AG04450 (cell line): ENCODE measurements at regions of chr10 and their contacts with region 1.

Region 1: GRCh38 chr10:104274762-104275721 is 6.1 kb downstream of the GSTO2 start:
- DNase-seq: no peak
- H3K4me3 ChIP-seq: peak overlapping the region; percentile 32
- H3K27ac ChIP-seq: no peak overlapping the region
- H3K27me3 ChIP-seq: peaks cover 2% of the 10 kb centered on the region
- CTCF ChIP-seq: peak; percentile 84

Region 2: DNA sequence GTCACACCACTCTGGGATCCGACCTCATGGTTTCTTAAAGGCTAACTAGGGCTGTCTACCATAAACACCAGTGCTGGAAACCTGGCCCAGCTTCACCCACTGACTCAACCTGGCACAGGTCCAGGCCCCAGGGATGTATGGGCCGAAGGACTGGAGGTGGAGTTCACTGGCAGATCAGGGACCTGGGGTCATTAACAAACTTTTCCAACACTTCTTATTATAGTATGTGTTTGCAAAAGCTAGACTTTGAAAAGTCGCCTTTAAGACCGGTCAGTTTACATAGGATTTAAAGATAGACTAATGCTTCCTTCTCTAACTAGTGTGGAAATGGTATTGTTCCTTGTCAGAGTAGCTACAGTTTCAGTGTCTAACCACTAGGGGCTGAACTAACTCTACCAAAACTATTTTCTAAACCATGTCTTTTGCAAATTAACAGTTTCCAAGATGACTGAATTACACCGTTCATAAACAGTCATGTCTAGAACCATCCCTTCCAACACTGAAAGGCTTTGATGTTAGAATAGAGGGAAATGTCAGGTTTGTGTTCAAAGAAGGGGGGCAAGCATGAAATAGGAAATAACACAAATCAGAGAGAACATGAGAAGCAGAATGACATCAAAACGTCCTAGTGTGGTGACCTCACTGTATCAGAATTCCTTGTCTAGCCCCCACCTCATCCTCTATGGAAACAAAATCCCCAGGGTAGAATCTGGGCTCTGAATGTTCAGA is 386.8 kb before region 1 on chr10:
- CTCF ChIA-PET with region 1: interaction called, 10 read pairs
- POLR2A ChIA-PET with region 1: interaction called, 3 read pairs
- DNase-seq: peak; percentile 73
- H3K4me3 ChIP-seq: no peak overlapping the region
- H3K27ac ChIP-seq: peak overlapping the region; percentile 33
- H3K27me3 ChIP-seq: no peaks in the 10 kb centered on the region
- CTCF ChIP-seq: peak; percentile 92

Region 3: DNA sequence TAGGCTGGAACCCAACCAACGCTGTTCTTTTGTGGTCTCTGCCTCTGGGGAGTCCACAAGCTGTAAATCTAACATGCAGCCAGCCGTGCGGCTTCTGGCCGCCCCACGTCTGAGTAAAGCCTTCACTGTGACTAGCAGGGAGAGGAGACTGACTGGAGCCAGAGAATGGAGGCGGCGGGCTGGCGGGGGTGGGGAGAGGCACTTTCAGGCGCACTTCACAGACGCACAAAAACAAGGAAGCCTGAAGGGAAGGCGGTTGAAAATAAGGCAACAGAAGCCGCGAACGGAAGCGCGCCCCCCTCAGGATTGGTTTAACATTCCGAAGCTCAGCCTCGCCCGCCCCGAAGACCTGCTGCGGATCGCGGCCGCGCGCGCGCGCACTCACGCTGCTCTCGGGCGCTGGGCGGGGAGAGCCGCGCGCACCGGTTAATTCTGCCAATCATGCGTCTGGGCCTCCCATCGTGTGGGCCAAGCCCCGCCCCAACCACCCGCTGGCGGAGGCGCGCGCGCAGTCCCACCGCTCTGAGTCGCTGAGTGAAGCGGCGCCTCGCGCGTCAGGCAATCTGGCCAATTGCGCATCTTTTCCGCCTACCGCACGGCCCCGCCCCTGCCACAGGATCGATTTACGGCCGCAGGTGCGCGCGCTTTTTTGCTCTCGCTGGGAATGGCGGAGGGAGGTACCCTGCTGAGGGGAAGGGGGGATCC is 153.4 kb before region 1 on chr10 and contains the start of gene SFR1:
- CTCF ChIA-PET with region 1: interaction called, 13 read pairs
- POLR2A ChIA-PET with region 1: interaction called, 3 read pairs
- DNase-seq: peak; percentile 94
- H3K4me3 ChIP-seq: peak within 1 kb of the TSS; percentile 90
- H3K27ac ChIP-seq: peak within 1 kb of the TSS; percentile 99
- H3K27me3 ChIP-seq: no peaks in the 10 kb centered on the region
- CTCF ChIP-seq: peak; percentile 62
- polyA plus RNA-seq, gene SFR1: 2.6 and 3.9 TPM in 2 replicates

Region 4: DNA sequence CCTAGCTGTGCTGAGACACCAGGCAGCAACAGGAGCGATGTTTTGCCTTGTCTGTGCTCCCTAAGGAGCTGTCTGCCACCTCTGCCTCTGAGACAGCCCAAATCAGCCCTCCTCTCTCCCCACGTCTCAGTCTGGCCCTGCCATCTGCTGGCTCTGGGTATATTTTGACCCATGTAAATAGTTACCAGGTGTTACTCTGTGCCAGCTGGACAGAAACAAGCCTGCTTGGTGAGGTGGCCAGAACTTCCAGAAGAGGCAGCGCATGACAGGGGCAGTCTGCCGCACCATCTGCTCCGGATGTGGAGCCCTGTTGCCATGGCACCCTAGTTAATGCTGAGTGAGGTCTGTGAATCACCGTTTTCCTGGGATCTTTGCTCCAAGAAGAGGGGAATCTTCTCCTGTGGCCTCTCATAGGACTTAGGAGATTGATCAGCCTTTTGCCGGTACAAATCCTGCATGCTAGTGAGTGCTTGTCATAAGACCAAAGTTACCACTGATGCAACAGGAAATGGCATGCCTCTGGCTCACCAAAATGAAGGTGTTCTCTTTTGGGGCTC is 25.8 kb after region 1 on chr10:
- CTCF ChIA-PET with region 1: interaction called, 35 read pairs
- POLR2A ChIA-PET with region 1: no interaction called
- DNase-seq: peak; percentile 93
- H3K4me3 ChIP-seq: peak overlapping the region; percentile 48
- H3K27ac ChIP-seq: peak overlapping the region; percentile 100
- H3K27me3 ChIP-seq: no peaks in the 10 kb centered on the region
- CTCF ChIP-seq: no peak

Region 5: DNA sequence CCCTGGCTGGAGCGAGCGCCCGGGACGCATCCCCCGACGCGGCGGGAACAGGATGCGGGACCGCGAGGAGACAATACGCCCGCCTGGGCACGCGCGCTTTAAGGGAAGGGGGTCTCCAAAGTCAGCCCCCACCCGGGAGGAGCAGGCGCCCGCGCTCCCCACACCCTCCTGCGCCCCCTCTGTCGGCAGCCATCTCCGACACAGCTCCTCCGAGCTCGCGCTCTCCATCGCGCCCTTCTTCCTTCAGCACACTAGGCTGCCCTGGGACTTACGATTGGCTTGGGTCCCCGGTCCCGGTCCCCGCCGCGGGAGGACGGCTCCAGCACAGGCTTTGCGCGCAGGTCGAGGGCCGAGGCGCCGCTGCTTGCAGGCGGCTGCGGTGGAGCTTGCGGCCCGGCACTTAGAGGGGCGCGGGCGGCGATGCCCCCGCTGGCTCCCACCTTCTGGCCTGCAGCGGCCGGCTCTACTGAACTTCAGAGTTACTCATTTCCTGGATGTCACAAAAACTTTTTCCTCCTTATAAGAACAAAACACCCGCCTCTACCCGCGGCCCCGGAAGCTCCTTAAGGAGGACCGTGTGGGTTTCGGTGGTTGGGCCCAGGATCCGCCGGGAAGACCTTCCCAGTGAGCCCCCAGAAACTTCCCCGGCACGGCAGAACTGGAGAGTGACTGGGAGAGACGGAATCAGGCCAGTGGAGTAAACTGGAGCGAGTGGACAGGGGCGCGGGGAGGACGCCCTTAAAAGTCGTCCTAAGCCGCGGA is 63.1 kb after region 1 on chr10 and contains the start of gene ITPRIP:
- CTCF ChIA-PET with region 1: interaction called, 37 read pairs
- POLR2A ChIA-PET with region 1: interaction called, 6 read pairs
- DNase-seq: no peak
- H3K4me3 ChIP-seq: peak within 1 kb of the TSS; percentile 87
- H3K27ac ChIP-seq: peak within 1 kb of the TSS; percentile 99
- H3K27me3 ChIP-seq: no peaks in the 10 kb centered on the region
- CTCF ChIP-seq: peak; percentile 36
- polyA plus RNA-seq, gene ITPRIP: 18.8 and 22.9 TPM in 2 replicates

Region 6: DNA sequence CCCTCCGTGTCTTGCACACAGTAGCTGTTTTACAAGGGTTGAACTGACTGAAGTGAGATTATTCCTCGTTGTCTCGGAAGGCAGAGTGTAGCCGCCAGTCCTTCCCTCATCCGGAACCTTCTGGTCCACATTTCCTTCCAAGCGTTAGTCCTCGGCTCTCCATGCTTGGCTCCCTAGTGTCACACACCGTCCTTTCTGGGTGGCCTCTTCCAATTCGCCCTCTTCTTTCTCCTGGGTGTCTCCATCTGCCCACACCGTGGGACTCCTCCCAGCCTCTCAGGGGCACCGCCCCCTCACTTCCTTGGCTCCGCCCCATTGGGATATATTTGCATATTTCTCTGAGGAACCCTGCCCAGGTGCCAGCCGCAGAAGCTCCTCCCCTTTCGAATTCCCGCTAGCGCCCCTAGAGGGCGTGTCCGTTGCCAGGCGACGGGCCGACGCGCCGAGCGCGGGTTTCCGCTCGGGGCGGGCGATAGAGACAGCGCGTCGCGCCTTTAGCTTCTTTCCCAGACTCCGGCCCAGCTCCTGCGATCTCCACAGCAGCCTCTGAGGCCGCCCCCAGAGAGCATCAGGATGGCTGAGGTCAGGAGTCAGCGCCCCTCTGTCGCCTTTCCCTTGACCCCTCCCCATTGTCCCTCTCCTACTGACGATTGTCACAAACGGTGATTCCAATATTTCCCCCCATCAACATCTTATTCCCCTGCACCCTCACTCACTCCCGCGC is 78.4 kb after region 1 on chr10 and contains the start of gene CFAP58:
- CTCF ChIA-PET with region 1: interaction called, 143 read pairs
- POLR2A ChIA-PET with region 1: no interaction called
- DNase-seq: no peak
- H3K4me3 ChIP-seq: peak within 1 kb of the TSS; percentile 68
- H3K27ac ChIP-seq: no peak within 1 kb of the TSS
- H3K27me3 ChIP-seq: no peaks in the 10 kb centered on the region
- CTCF ChIP-seq: peak; percentile 66
- polyA plus RNA-seq, gene CFAP58: 0.35 and 0.51 TPM in 2 replicates

Region 7: GRCh38 chr10:104501864-104502579 is 227.0 kb after region 1 on chr10:
- CTCF ChIA-PET with region 1: no interaction called
- POLR2A ChIA-PET with region 1: no interaction called
- DNase-seq: no peak
- H3K4me3 ChIP-seq: no peak overlapping the region
- H3K27ac ChIP-seq: no peak overlapping the region
- H3K27me3 ChIP-seq: no peaks in the 10 kb centered on the region
- CTCF ChIP-seq: no peak

Region 8: GRCh38 chr10:104521901-104522694 is 247.1 kb after region 1 on chr10:
- CTCF ChIA-PET with region 1: no interaction called
- POLR2A ChIA-PET with region 1: no interaction called
- DNase-seq: no peak
- H3K4me3 ChIP-seq: no peak overlapping the region
- H3K27ac ChIP-seq: no peak overlapping the region
- H3K27me3 ChIP-seq: no peaks in the 10 kb centered on the region
- CTCF ChIP-seq: no peak